Mammary epithelial cell (primary cell): ENCODE measurements at regions of chr1 and their contacts with region 1.

Region 1: GRCh38 chr1:8161546-8162105 is 135.5 kb upstream of the ERRFI1 start:
- DNase-seq: no peak
- H3K4me3 ChIP-seq: no peak overlapping the region
- H3K27ac ChIP-seq: no peak overlapping the region
- H3K4me1 ChIP-seq: no peaks in the 10 kb centered on the region
- H3K27me3 ChIP-seq: no peaks in the 10 kb centered on the region
- CTCF ChIP-seq: no peak

Region 2: DNA sequence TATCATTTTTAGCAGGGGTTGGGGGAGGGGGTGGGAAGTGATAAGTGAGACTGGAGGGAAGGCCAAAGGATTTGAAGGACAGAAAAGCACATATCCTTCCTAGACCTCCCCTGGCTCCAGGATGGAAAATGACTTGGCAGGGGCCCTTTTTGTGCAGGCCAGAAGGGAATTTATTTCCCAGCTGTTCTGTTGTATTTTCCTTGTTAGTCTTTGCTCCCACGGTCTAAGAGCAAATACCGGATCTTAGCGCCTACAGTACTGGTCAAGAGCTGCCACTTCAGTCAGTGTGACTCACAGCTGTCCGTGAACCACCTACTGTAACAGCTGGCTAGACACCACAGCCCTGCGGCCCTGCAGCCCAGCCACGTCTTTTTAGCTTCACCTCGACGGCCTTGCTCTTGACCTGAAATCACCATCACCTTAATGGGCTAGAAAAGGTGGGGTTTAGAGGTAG is 84.5 kb before region 1 on chr1:
- CTCF ChIA-PET with region 1: no interaction called
- dilution Hi-C with region 1: loop called (anchors 5 kb)
- in situ Hi-C with region 1: no loop called
- intact Hi-C with region 1: no loop called
- DNase-seq: peak; percentile 89
- H3K4me3 ChIP-seq: no peak overlapping the region
- H3K27ac ChIP-seq: peak overlapping the region; percentile 95
- H3K4me1 ChIP-seq: peaks cover 38% of the 10 kb centered on the region
- H3K27me3 ChIP-seq: no peaks in the 10 kb centered on the region
- CTCF ChIP-seq: no peak

Region 3: DNA sequence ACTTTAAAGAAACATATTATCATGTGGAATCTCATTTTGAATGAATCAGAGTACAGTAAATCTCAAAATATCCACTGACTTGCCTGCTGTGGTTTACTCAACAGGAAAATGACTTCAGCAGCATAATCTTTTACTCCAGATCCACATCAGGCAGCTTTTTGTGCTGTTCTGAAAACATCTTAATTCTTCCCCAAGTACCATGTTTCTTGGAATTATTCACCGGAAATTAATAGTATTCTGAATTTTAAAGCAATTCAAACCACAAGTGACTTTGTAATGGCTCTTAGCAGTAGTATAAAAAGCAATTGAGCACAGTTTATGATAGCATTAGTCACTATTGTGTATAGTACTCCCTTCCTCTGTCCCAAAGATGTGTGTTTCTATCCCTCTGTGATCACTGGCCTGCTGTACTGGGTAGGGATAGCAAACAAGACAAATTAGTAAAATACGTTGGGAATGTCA is 71.4 kb before region 1 on chr1:
- CTCF ChIA-PET with region 1: no interaction called
- dilution Hi-C with region 1: no loop called
- in situ Hi-C with region 1: no loop called
- intact Hi-C with region 1: no loop called
- DNase-seq: peak; percentile 92
- H3K4me3 ChIP-seq: no peak overlapping the region
- H3K27ac ChIP-seq: peak overlapping the region; percentile 85
- H3K4me1 ChIP-seq: peaks cover 47% of the 10 kb centered on the region
- H3K27me3 ChIP-seq: no peaks in the 10 kb centered on the region
- CTCF ChIP-seq: no peak

Region 4: DNA sequence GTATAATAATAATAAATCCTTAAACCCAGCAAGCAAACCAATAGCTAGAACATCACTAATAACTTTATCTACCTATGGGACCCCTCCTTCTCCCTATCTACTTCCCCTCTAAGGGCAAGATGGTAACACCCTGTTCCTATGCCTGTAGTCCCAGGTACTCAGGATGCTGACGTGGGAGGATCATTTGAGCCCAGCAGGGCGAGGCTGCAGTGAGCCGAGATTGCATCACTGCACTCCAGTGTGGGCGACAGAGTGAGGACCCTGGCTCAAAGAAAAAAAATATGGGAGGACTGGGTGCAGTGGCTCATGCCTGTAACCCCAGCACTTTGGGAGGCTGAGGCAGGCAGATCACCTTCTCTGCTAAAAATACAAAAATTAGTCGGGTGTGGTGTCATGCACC is 13.2 kb after region 1 on chr1:
- CTCF ChIA-PET with region 1: no interaction called
- dilution Hi-C with region 1: no loop called
- in situ Hi-C with region 1: no loop called
- intact Hi-C with region 1: no loop called
- DNase-seq: peak; percentile 43
- H3K4me3 ChIP-seq: no peak overlapping the region
- H3K27ac ChIP-seq: peak overlapping the region; percentile 38
- H3K4me1 ChIP-seq: peaks cover 14% of the 10 kb centered on the region
- H3K27me3 ChIP-seq: no peaks in the 10 kb centered on the region
- CTCF ChIP-seq: no peak

Region 5: GRCh38 chr1:8197493-8198282 is 36.1 kb after region 1 on chr1:
- CTCF ChIA-PET with region 1: no interaction called
- dilution Hi-C with region 1: no loop called
- in situ Hi-C with region 1: no loop called
- intact Hi-C with region 1: no loop called
- DNase-seq: peak; percentile 94
- H3K4me3 ChIP-seq: no peak overlapping the region
- H3K27ac ChIP-seq: peak overlapping the region; percentile 25
- H3K4me1 ChIP-seq: peaks cover 45% of the 10 kb centered on the region
- H3K27me3 ChIP-seq: no peaks in the 10 kb centered on the region
- CTCF ChIP-seq: no peak

Region 6: DNA sequence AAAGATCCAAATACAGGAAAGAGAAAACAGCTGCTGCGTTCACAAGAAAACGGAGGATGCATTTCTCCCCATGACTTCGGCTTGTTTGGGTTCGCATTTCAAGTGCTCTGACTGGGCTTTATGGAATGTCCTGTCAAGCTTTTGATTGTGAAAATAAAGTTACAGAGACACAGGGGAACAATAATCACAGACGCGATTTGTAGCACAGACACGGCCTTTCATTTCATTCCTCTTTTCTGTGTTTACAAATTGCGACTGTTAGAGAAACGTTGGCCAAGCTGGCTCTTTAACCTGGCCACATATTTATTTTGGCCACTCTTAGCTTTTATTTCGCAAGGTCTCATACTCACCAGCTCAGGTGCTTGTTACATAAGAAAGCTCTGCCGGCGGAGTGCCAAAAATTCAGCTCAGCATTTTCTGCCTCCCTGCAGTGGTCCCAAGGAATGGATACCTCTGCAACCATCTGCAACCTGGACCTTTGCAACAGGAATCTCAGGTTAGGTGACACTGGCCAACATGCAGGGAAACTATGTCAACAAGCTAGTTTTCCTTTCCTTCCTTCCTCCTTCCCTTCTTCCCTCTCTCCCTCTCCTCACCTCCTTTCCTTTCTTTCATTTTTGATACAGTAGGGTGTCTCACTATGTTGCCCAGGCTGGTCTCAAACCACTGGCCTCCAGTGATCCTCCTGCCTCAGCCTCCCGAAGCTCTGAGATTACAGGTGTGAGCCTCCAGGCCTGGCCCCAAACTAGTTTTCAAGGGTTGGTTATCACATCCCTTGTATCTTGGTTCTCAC is 98.1 kb after region 1 on chr1:
- CTCF ChIA-PET with region 1: no interaction called
- dilution Hi-C with region 1: loop called (anchors 5 kb)
- in situ Hi-C with region 1: no loop called
- intact Hi-C with region 1: no loop called
- DNase-seq: peak; percentile 76
- H3K4me3 ChIP-seq: peak overlapping the region in 2 of 3 experiments; percentile 1 to 28
- H3K27ac ChIP-seq: peak overlapping the region; percentile 40
- H3K4me1 ChIP-seq: peaks cover 30% of the 10 kb centered on the region
- H3K27me3 ChIP-seq: no peaks in the 10 kb centered on the region
- CTCF ChIP-seq: no peak

Region 7: GRCh38 chr1:8510041-8510823 is 348.6 kb after region 1 on chr1:
- CTCF ChIA-PET with region 1: no interaction called
- dilution Hi-C with region 1: no loop called
- in situ Hi-C with region 1: no loop called
- intact Hi-C with region 1: no loop called
- DNase-seq: peak; percentile 48
- H3K4me3 ChIP-seq: no peak overlapping the region
- H3K27ac ChIP-seq: no peak overlapping the region
- H3K4me1 ChIP-seq: peaks cover 8% of the 10 kb centered on the region
- H3K27me3 ChIP-seq: no peaks in the 10 kb centered on the region
- CTCF ChIP-seq: no peak